H1 (cell line): ENCODE measurements at regions of chr17 and their contacts with region 1.

Region 1: GRCh38 chr17:7435221-7435675 is at the start of gene TMEM102:
- DNase-seq: peak; percentile 96 to 99
- H3K4me3 ChIP-seq: peak within 1 kb of the TSS; percentile 50 to 83 (median 67)
- H3K27ac ChIP-seq: peak within 1 kb of the TSS; percentile 59
- H3K4me1 ChIP-seq: peaks cover 0 to 22% (median 8%) of the 10 kb centered on the region in 4 experiments; a peak in 6 of 7 replicates
- H3K27me3 ChIP-seq: peaks cover 2 to 19% (median 12%) of the 10 kb centered on the region in 4 experiments; a peak in 6 of 7 replicates
- CTCF ChIP-seq: no peak
- EP300 ChIP-seq: no peak
- POLR2A ChIP-seq: 0 out of 3 replicates have a peak, but pooled peaks of 1 of the 2 experiments have one; percentile 21
- RAD21 ChIP-seq: no peak
- total RNA-seq, gene TMEM102: 11.2 and 12.2 TPM in 2 replicates

Region 2: GRCh38 chr17:7252176-7253043 is 182.8 kb before region 1 on chr17 and contains the start of gene ELP5:
- CTCF ChIA-PET with region 1: no interaction called
- POLR2A ChIA-PET with region 1: no interaction called
- DNase-seq: peak in 1 of 2 experiments; percentile 97
- H3K4me3 ChIP-seq: peak within 1 kb of the TSS; percentile 58 to 84 (median 79)
- H3K27ac ChIP-seq: peak within 1 kb of the TSS; percentile 97
- H3K4me1 ChIP-seq: peaks cover 0 to 9% (median 4%) of the 10 kb centered on the region in 4 experiments; a peak in 6 of 7 replicates
- H3K27me3 ChIP-seq: no peaks in the 10 kb centered on the region
- CTCF ChIP-seq: peak in 2 of 3 experiments; percentile 20 to 28; a peak in 2 of 4 replicates
- EP300 ChIP-seq: no peak
- POLR2A ChIP-seq: peak in 1 of 2 experiments; percentile 91; a peak in 2 of 3 replicates
- RAD21 ChIP-seq: peak in 1 of 2 experiments; percentile 11; a peak in 1 of 4 replicates
- total RNA-seq, gene ELP5: 75.4 and 78.1 TPM in 2 replicates

Region 3: GRCh38 chr17:7403977-7404736 is 31.1 kb before region 1 on chr17 and contains the start of gene TMEM256:
- CTCF ChIA-PET with region 1: interaction called, 26 read pairs
- POLR2A ChIA-PET with region 1: interaction called, 66 read pairs
- DNase-seq: peak; percentile 96 to 99
- H3K4me3 ChIP-seq: peak within 1 kb of the TSS; percentile 72 to 94 (median 81)
- H3K27ac ChIP-seq: peak within 1 kb of the TSS; percentile 81; the same call in 1 of the 2 replicates
- H3K4me1 ChIP-seq: peaks cover 0 to 15% (median 11%) of the 10 kb centered on the region in 4 experiments; a peak in 5 of 7 replicates
- H3K27me3 ChIP-seq: no peaks in the 10 kb centered on the region; a peak in 1 of 7 replicates
- CTCF ChIP-seq: no peak
- EP300 ChIP-seq: no peak
- POLR2A ChIP-seq: peak in 1 of 2 experiments; percentile 74; a peak in 2 of 3 replicates
- RAD21 ChIP-seq: no peak
- total RNA-seq, gene TMEM256: 97.0 and 104 TPM in 2 replicates

Region 4: DNA sequence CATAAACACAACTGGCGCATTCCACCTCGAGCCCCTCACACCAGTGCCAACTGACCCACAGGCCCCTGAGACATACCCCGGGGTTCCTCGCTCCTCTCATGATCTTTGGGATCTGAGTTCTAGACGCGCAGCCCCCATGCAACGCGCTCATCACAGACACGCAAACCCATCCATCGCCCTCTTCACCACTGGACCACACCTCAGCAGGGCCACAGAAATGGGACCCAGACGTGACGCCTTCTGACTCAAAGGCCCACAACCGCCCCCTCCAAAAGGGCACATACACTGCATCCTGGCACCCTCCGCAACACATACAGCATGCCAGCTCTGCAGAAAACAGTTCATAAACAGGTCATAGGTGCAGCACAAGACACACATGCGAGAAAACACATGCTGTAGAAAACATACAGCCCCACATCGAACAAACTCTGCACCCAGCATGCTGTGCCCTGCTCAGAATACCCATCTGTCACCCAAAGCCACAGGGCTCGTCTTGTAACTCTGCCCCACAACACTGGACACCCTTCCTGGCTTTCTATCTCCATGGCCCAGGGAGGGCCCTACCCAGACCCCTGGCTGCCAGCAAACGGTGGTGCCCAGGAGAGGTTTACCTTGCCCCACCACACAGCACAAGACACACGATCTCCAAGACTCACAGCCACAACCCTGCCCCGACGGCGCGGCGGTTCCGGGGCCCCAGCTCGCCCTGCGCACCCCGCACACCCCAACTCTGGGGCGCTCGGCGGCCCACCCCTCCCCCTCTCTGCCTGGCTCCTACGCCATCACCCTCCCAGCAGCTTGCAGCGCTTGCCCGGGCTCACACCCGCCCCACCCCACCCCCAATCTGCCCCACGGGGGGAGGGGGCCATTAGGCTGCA is 43.3 kb after region 1 on chr17:
- CTCF ChIA-PET with region 1: interaction called, 17 read pairs
- POLR2A ChIA-PET with region 1: interaction called, 339 read pairs
- DNase-seq: peak in 1 of 2 experiments; percentile 69
- H3K4me3 ChIP-seq: peak overlapping the region; percentile 41 to 94 (median 50)
- H3K27ac ChIP-seq: peak overlapping the region; percentile 56
- H3K4me1 ChIP-seq: peaks cover 2 to 28% (median 21%) of the 10 kb centered on the region in 4 experiments
- H3K27me3 ChIP-seq: no peaks in the 10 kb centered on the region; a peak in 1 of 7 replicates
- CTCF ChIP-seq: no peak
- EP300 ChIP-seq: no peak
- POLR2A ChIP-seq: no peak
- RAD21 ChIP-seq: no peak

Region 5: DNA sequence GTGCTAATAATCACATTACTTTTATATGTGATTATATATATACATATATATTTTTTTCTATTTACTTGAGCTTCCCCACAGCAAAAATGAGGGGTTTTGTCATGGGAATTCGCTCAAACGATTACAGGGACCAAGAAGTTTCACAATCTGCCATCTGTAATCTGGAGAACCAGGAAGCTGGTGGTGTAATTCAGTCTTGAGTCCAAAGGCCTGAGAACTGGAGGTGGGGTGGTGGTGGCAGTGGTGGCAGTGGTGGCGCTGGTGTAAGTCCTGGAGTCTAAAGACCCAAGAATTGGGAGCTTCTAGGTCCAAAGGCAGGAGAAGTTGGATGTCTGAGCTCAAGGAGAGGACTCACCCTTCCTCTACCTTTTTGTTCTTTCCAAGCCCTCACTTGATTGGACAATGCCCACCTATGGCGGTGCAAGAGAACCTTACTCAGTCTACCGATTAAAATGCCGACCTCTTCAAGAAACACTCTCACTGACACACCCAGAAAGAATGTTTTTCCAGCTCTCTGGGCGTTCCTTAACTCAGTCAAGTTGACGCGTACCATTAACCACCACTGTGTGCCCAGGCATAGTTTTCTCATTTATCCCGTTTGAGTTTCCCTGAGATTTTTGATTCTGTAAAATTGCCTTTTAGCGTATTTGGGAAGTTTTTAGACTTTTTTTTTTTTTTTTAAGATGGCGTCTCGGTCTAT is 80.8 kb after region 1 on chr17:
- CTCF ChIA-PET with region 1: interaction called, 13 read pairs
- POLR2A ChIA-PET with region 1: interaction called, 3 read pairs
- DNase-seq: no peak
- H3K4me3 ChIP-seq: no peak overlapping the region
- H3K27ac ChIP-seq: no peak overlapping the region
- H3K4me1 ChIP-seq: no peaks in the 10 kb centered on the region
- H3K27me3 ChIP-seq: no peaks in the 10 kb centered on the region
- CTCF ChIP-seq: no peak
- EP300 ChIP-seq: no peak
- POLR2A ChIP-seq: no peak
- RAD21 ChIP-seq: no peak

Region 6: DNA sequence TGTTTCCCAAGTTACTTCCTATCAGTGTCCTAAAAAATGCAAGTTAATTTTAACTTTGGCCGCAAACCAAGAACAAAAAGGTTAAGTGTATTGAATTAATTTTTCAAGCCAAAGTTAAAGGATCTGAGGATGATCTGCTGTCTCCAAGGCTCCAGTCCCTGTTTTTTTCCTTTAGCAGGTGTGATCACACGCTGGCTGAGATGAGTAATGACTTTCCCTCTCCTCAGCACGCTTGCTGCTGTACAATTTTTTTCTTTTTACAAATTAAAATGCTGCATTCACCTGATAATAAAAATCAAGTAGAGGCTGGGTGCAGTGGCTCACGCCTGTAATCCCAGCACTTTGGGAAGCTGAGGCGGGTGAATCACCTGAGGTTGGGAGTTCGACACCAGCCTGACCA is 109.7 kb after region 1 on chr17:
- CTCF ChIA-PET with region 1: no interaction called
- POLR2A ChIA-PET with region 1: no interaction called
- DNase-seq: no peak
- H3K4me3 ChIP-seq: no peak overlapping the region
- H3K27ac ChIP-seq: no peak overlapping the region
- H3K4me1 ChIP-seq: peaks cover 0 to 4% (median 3%) of the 10 kb centered on the region in 4 experiments; a peak in 2 of 7 replicates
- H3K27me3 ChIP-seq: peaks cover 0 to 5% (median 3%) of the 10 kb centered on the region in 4 experiments; a peak in 4 of 7 replicates
- CTCF ChIP-seq: no peak
- EP300 ChIP-seq: no peak
- POLR2A ChIP-seq: no peak
- RAD21 ChIP-seq: no peak